Naive thymus-derived CD4-positive, alpha-beta T cell (primary cell): ENCODE measurements at regions of chr5 and their contacts with region 1.

Region 1: GRCh38 chr5:39064450-39064849 is 9.7 kb downstream of the RICTOR start:
- DNase-seq: no peak
- ATAC-seq: no peak
- H3K4me3 ChIP-seq: no peak overlapping the region
- H3K4me3 Mint-ChIP-seq: peak overlapping the region in 6 of 10 donors; percentile 38 to 70 (median 62)
- H3K27ac ChIP-seq: no peak overlapping the region
- H3K27ac Mint-ChIP-seq: peak overlapping the region in 5 of 9 donors; percentile 1 to 79 (median 64)
- H3K4me1 ChIP-seq: peaks cover 11 to 14% of the 10 kb centered on the region in 2 donors
- H3K4me1 Mint-ChIP-seq: peaks cover 38 to 93% (median 86%) of the 10 kb centered on the region in 7 donors
- H3K27me3 ChIP-seq: no peaks in the 10 kb centered on the region
- H3K27me3 Mint-ChIP-seq: no peaks in the 10 kb centered on the region

Region 2: GRCh38 chr5:39049315-39049714 is 15.1 kb before region 1 on chr5:
- CTCF ChIA-PET with region 1: no interaction called
- POLR2A ChIA-PET with region 1: interaction called, 3 read pairs
- intact Hi-C with region 1: loop called (anchors 2 kb)
- DNase-seq: no peak
- ATAC-seq: no peak
- H3K4me3 ChIP-seq: no peak overlapping the region
- H3K4me3 Mint-ChIP-seq: peak overlapping the region in 5 of 10 donors; percentile 4 to 42 (median 15)
- H3K27ac ChIP-seq: no peak overlapping the region
- H3K27ac Mint-ChIP-seq: peak overlapping the region in 3 of 9 donors; percentile 10 to 54 (median 48)
- H3K4me1 ChIP-seq: peaks cover 4 to 16% of the 10 kb centered on the region in 2 donors
- H3K4me1 Mint-ChIP-seq: peaks cover 16 to 90% (median 82%) of the 10 kb centered on the region in 7 donors
- H3K27me3 ChIP-seq: no peaks in the 10 kb centered on the region
- H3K27me3 Mint-ChIP-seq: no peaks in the 10 kb centered on the region